H1 (cell line): ENCODE measurements at regions of chr2 and their contacts with region 1.

Region 1: GRCh38 chr2:127086990-127087790 is 19.8 kb downstream of the BIN1 start:
- DNase-seq: peak in 1 of 2 experiments; percentile 69
- H3K4me3 ChIP-seq: no peak overlapping the region
- H3K27ac ChIP-seq: no peak overlapping the region
- H3K4me1 ChIP-seq: peaks cover 0 to 32% (median 12%) of the 10 kb centered on the region in 4 experiments; a peak in 6 of 7 replicates
- H3K27me3 ChIP-seq: no peaks in the 10 kb centered on the region
- CTCF ChIP-seq: no peak
- EP300 ChIP-seq: no peak
- POLR2A ChIP-seq: no peak
- RAD21 ChIP-seq: no peak

Region 2: GRCh38 chr2:127072970-127073369 is 14.2 kb before region 1 on chr2:
- CTCF ChIA-PET with region 1: interaction called, 70 read pairs
- POLR2A ChIA-PET with region 1: interaction called, 3 read pairs
- DNase-seq: no peak
- H3K4me3 ChIP-seq: no peak overlapping the region
- H3K27ac ChIP-seq: no peak overlapping the region
- H3K4me1 ChIP-seq: no peaks in the 10 kb centered on the region; a peak in 2 of 7 replicates
- H3K27me3 ChIP-seq: no peaks in the 10 kb centered on the region
- CTCF ChIP-seq: no peak
- EP300 ChIP-seq: no peak
- POLR2A ChIP-seq: no peak
- RAD21 ChIP-seq: no peak

Region 3: GRCh38 chr2:127106951-127107621 is 19.9 kb after region 1 on chr2 and contains the start of gene BIN1:
- CTCF ChIA-PET with region 1: interaction called, 12 read pairs
- POLR2A ChIA-PET with region 1: interaction called, 12 read pairs
- DNase-seq: peak; percentile 70 to 90
- H3K4me3 ChIP-seq: peak within 1 kb of the TSS; percentile 65 to 85 (median 72)
- H3K27ac ChIP-seq: no peak within 1 kb of the TSS
- H3K4me1 ChIP-seq: peaks cover 6 to 21% (median 13%) of the 10 kb centered on the region in 4 experiments
- H3K27me3 ChIP-seq: peaks cover 0 to 7% (median 0%) of the 10 kb centered on the region in 4 experiments; a peak in 1 of 7 replicates
- CTCF ChIP-seq: no peak
- EP300 ChIP-seq: no peak
- POLR2A ChIP-seq: peak in 1 of 2 experiments; percentile 36; a peak in 2 of 3 replicates
- RAD21 ChIP-seq: no peak
- total RNA-seq, gene BIN1: 35.6 and 41.9 TPM in 2 replicates

Region 4: GRCh38 chr2:127185093-127185492 is 97.9 kb after region 1 on chr2:
- CTCF ChIA-PET with region 1: no interaction called
- POLR2A ChIA-PET with region 1: no interaction called
- DNase-seq: no peak
- H3K4me3 ChIP-seq: no peak overlapping the region
- H3K27ac ChIP-seq: no peak overlapping the region
- H3K4me1 ChIP-seq: peaks cover 0 to 20% (median 10%) of the 10 kb centered on the region in 4 experiments; a peak in 4 of 7 replicates
- H3K27me3 ChIP-seq: no peaks in the 10 kb centered on the region
- CTCF ChIP-seq: no peak
- EP300 ChIP-seq: no peak
- POLR2A ChIP-seq: no peak
- RAD21 ChIP-seq: no peak